OCI-LY7 (cell line): ENCODE measurements at regions of chr11 and their contacts with region 1.

Region 1: GRCh38 chr11:9757809-9758636 is 94.1 kb downstream of the SWAP70 start:
- DNase-seq: peak; percentile 92
- H3K4me3 ChIP-seq: peak overlapping the region; percentile 77
- H3K27ac ChIP-seq: peak overlapping the region; percentile 66
- H3K4me1 ChIP-seq: peaks cover 80% of the 10 kb centered on the region
- CTCF ChIP-seq: peak; percentile 77

Region 2: DNA sequence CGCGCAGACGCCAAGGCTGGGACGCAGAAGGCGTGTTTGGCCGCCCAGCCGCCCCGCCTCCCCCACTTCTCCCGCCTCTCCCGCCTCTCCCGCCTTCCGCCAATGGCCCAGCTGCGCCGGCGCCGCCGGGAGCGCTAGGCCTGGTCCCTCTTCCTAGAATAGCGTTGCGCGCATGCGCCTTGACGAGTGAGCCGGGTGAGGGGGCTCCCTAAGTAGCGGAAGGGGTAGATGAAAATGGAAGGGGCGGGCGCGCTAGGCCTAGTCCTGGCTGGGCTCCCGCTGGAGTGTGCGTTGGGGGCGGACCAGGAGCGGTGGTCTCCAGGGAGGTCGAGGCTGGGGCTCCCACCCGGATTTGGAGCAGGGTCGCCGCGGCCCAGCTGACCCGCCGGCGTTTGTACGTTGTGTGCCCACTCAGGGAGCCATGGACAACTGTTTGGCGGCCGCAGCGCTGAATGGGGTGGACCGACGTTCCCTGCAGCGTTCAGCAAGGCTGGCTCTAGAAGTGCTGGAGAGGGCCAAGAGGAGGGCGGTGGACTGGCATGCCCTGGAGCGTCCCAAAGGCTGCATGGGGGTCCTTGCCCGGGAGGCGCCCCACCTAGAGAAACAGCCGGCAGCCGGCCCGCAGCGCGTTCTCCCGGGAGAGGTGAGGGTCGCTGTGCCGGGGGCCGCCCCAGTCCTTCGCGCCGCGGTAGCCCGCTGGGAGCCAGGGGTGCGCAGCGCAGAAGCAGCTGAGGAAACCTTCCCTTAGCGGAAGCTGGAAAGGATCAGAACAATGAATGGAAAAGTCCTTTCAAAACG is 846.8 kb before region 1 on chr11 and contains the start of gene AKIP1:
- CTCF ChIA-PET with region 1: no interaction called
- POLR2A ChIA-PET with region 1: no interaction called
- intact Hi-C with region 1: loop called (anchors 10 kb)
- DNase-seq: peak; percentile 89
- H3K4me3 ChIP-seq: peak within 1 kb of the TSS; percentile 77
- H3K27ac ChIP-seq: peak within 1 kb of the TSS; percentile 40
- H3K4me1 ChIP-seq: peaks cover 23% of the 10 kb centered on the region
- CTCF ChIP-seq: no peak
- total RNA-seq, gene AKIP1: 16.9 and 25.2 TPM in 2 replicates

Region 3: DNA sequence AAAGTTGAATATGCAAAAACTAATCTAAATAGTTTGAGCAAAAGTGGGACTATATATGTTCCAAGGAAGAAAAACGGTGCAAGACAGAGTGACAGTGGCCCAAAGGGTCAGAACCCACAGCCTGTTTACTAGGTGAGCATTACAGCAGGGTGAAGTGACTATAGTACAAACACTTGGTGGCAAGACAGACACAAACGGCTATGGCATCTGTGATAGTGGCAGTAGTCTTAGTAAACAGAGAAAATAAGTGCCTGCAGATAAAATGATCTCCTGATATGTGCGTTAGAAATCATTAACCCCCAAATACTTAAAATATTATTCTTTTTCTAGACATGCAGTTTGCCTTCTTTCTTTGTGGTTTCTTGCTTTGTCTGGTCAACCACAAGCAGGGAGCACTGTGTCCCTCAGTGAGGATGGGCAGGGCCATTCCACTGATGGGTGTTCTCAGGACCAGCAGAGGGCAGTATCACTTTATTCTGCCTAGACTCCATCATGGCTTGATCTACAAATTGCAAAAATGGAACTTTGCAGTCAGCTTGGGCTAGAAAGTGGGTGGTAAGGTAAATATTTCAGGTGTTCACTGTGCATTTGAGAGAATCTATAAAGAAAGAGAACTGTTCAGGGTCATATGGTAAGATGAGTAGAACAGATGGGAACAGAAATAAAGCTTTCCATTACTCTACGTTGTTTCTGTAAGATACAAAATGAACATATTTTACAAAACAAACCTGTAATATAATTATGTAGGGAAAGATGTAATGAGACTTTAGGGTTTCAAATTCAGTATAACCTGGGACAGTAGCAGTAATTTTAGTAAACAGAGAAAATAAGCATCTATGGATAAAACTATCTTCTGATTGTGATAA is 104.1 kb after region 1 on chr11:
- CTCF ChIA-PET with region 1: interaction called, 3 read pairs
- POLR2A ChIA-PET with region 1: interaction called, 5 read pairs
- intact Hi-C with region 1: loop called (anchors 2 kb)
- DNase-seq: peak; percentile 80
- H3K4me3 ChIP-seq: no peak overlapping the region
- H3K27ac ChIP-seq: peak overlapping the region; percentile 21
- H3K4me1 ChIP-seq: peaks cover 32% of the 10 kb centered on the region
- CTCF ChIP-seq: peak; percentile 98

Region 4: GRCh38 chr11:10076458-10077141 is 318.6 kb after region 1 on chr11:
- CTCF ChIA-PET with region 1: no interaction called
- POLR2A ChIA-PET with region 1: interaction called, 3 read pairs
- intact Hi-C with region 1: loop called (anchors 1 kb)
- DNase-seq: peak; percentile 65
- H3K4me3 ChIP-seq: no peak overlapping the region
- H3K27ac ChIP-seq: no peak overlapping the region
- H3K4me1 ChIP-seq: no peaks in the 10 kb centered on the region
- CTCF ChIP-seq: peak; percentile 87

Region 5: DNA sequence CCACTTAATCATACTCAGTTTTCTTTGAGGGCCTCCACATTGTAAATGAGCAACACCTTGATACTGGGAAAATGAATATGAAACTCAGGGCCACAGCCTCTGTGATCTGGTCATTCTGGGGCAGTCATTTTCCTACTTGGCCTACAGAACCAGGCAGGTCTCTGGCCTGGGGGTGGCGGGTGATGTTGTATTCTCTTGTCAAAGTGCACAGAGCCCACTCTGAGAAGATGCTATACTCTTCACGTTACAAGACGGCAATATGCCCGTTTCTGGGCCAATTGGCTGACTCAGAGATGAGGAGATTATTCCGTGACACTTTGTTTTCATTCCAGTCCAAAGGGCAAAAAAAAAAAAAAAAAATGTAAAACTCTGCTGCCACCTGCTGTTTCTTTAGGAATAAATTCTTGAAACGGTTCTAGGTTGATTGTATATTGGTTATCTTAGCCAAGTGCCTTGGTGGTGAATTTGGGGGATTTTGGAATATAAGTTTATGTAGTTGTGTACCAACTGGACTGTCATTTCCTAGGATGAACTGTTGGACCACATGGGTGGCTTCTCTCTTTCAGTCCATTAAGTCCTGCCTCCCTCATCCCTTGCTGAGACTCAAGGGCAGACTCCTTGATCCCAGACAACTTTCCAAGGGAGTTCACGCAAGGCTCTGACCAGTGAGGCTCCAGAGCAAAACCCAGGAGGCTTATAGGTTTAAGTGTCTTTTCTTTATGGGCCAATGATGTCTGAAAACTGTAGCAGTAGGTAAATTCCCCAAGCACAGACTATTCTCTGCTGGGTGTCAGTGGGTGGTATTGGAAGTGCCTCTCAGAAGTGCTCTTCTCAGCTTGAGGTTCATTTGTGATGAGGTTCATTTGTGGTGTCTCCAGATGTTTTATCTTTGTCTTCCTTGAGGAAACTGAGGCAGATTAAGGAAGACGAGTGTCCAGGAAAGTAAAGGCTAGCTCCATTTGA is 565.1 kb after region 1 on chr11:
- CTCF ChIA-PET with region 1: no interaction called
- POLR2A ChIA-PET with region 1: no interaction called
- intact Hi-C with region 1: loop called (anchors 1 kb)
- DNase-seq: peak; percentile 76
- H3K4me3 ChIP-seq: peak overlapping the region; percentile 8
- H3K27ac ChIP-seq: peak overlapping the region; percentile 5
- H3K4me1 ChIP-seq: peaks cover 40% of the 10 kb centered on the region
- CTCF ChIP-seq: peak; percentile 87